Left ventricle myocardium superior (tissue), 1 donor: ENCODE measurements at regions of chr1 and their contacts with region 1.

Region 1: GRCh38 chr1:180343931-180344769 is 114.1 kb downstream of the LHX4 start:
- DNase-seq: no peak
- ATAC-seq: peak; percentile 63

Region 2: DNA sequence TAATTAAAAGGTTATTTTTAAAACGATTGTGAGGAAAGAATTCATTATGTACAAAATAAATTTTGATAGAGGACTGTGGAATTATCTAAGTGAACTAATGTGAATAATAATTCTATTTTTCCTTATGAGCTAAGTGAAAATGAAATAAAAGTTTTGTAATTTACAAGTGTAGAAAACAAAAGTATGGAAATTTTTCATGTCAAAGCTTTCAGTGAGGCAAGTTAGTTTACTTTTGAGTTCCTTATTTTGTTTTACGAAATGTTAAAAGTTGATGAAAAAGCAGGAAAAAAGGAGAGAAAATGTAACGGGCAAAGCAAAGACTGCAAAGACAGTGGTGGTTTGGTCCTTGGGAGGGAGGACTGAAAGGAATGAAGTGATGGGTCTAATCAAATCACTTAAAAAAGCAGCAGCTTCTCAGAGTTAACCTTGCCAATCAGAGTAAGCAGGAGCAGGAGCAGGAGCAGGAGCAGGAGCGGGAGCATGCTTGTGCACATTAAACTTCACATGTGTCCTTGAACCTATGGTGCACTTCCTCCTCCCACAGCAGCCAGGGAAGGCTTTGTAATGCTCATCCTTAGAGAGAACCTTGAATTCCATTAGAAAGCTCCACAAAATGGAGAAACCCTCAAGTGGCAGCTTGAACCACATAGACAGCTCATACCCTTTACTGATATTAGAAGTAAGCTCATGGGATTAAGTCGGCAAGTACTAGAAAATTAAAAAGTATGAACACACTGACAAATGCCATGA is 19.3 kb after region 1 on chr1:
- intact Hi-C with region 1: loop called (anchors 2 kb)
- DNase-seq: no peak
- ATAC-seq: no peak